OCI-LY7 (cell line): ENCODE measurements at regions of chr1 and their contacts with region 1.

Region 1: DNA sequence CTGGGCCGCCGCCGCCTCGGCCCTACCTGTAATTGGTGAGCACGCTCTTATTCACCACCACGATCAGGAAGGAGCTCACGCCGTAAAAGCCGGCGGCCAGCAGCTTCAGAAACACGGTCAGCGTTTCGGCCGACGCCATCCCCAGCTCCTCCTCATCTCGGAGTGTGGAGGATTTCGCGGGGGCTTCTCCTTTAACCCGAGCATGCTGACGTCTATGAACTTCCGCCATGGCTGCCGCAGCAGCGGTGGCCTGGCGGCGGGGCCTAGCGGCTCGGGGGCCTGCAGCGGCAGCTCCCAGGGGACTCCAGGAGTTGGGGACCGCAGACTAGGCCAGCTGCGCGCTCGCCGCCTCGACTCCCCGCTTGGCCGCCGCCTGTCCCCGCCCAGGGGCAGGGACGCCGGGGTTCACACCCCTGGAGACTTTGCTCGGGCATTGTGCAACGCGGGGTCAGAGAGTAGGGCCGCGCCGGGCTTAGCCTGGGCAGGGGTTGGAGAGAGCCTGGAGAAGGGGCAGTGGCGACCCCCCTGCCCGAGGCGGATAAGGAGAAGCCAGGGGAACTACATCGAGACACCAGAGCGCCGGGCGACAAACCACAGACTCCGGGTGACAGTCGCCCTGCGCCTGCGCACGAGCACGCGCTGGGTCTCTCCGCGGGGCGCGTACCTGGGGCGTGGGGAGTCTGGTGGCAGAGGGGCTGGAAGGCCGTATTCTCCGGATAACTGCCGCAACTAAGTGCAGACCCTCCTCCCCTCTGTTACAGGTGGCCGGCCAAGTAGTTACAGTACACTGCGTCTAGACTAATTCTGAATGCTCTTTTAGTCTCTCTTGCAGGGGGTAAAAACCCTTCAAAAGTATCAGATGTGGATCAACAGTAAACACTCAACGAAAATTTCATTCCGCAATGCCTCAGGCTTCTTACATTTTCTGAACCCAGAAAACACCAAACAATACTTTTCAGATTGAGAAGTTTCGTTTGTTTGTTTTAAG is at the start of gene SLC35D1:
- DNase-seq: peak; percentile 91
- H3K4me3 ChIP-seq: peak within 1 kb of the TSS; percentile 89
- H3K27ac ChIP-seq: peak within 1 kb of the TSS; percentile 76
- H3K4me1 ChIP-seq: peaks cover 20% of the 10 kb centered on the region
- CTCF ChIP-seq: no peak
- total RNA-seq, gene SLC35D1: 10.8 and 11.2 TPM in 2 replicates

Region 2: GRCh38 chr1:66929999-66930822 is 123.9 kb before region 1 on chr1:
- CTCF ChIA-PET with region 1: no interaction called
- POLR2A ChIA-PET with region 1: interaction called, 5 read pairs
- intact Hi-C with region 1: loop called (anchors 1 kb)
- DNase-seq: peak; percentile 96
- H3K4me3 ChIP-seq: peak overlapping the region; percentile 98
- H3K27ac ChIP-seq: peak overlapping the region; percentile 86
- H3K4me1 ChIP-seq: peaks cover 60% of the 10 kb centered on the region
- CTCF ChIP-seq: peak; percentile 36; the same call in 1 of the 2 replicates

Region 3: DNA sequence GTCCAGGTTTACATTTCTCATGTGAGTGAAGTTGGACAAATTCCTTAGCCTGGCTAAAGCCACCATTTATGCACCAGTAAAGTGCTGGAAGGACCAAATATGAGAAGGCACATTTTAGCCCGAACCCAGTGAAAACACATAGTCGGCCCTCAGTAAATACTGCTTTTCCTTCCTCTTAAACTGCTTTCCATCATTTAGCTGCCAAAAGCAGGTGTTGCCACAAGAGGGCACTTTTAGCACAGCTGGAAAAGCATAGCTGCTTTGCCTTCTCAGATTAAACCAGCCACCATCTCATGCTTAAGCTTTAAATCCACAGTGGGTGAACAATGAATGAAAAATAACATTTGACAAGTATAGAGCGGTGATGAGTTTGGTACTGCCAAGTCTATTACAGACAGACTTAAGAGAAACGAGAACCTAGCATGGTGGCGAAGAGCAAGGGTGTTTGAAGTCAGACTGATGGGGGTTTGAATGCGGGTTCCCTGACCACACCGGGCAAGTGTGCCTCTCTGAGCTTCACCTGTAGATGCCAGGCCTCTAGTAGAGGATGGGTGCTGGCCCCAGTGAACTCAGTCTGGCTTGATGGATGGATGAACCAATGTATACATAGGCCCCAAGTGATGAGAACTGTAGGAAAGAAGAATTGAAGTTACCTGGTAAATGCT is 57.9 kb before region 1 on chr1:
- CTCF ChIA-PET with region 1: no interaction called
- POLR2A ChIA-PET with region 1: no interaction called
- intact Hi-C with region 1: loop called (anchors 2 kb)
- DNase-seq: peak; percentile 85
- H3K4me3 ChIP-seq: no peak overlapping the region
- H3K27ac ChIP-seq: no peak overlapping the region
- H3K4me1 ChIP-seq: peaks cover 26% of the 10 kb centered on the region
- CTCF ChIP-seq: peak; percentile 97

Region 4: DNA sequence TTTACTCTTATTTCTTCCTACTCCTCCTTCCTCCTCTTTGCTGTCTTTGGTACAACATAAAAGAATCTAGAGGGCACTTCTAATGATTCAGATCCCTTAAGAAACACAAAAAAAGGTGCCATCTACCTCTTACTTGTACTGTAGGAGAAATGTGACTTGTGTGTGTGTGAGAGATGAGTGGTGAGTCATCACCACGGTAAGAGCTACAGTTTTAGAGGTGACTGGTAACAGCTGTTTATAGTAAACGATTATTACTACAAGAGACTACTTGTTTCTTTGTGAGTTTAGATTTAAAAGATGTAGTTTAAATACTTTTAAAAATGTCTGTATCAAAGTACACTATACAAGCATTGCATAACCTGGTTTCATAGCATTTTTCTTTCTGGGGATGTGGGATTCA is 40.5 kb before region 1 on chr1:
- CTCF ChIA-PET with region 1: no interaction called
- POLR2A ChIA-PET with region 1: interaction called, 3 read pairs
- intact Hi-C with region 1: loop called (anchors 5 kb)
- DNase-seq: no peak
- H3K4me3 ChIP-seq: no peak overlapping the region
- H3K27ac ChIP-seq: no peak overlapping the region
- H3K4me1 ChIP-seq: no peaks in the 10 kb centered on the region
- CTCF ChIP-seq: no peak

Region 5: DNA sequence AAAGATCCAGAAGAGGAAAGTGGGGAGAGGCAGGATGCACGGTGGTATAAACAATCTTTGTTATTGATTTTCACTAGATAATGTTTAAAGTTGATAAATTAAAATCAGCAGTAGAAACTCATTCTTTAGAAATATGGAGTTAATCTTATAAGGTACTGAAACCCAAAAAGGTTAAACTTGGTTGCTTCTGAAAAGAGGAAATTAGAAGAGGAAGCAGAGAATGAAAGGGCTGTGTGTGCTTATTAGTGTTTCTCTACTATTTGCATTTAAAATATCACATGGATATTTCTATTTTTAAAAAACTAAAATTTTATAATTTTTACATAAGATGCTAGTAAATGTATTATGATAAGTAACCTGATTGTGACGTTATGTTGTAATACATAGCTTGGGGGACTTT is 56.3 kb after region 1 on chr1:
- CTCF ChIA-PET with region 1: no interaction called
- POLR2A ChIA-PET with region 1: interaction called, 4 read pairs
- intact Hi-C with region 1: loop called (anchors 1 kb)
- DNase-seq: peak; percentile 73
- H3K4me3 ChIP-seq: peak overlapping the region; percentile 46
- H3K27ac ChIP-seq: peak overlapping the region; percentile 90
- H3K4me1 ChIP-seq: peaks cover 70% of the 10 kb centered on the region
- CTCF ChIP-seq: no peak

Region 6: GRCh38 chr1:67149179-67149770 is 95.2 kb after region 1 on chr1:
- CTCF ChIA-PET with region 1: interaction called, 3 read pairs
- POLR2A ChIA-PET with region 1: interaction called, 8 read pairs
- intact Hi-C with region 1: loop called (anchors 2 kb)
- DNase-seq: peak; percentile 90
- H3K4me3 ChIP-seq: peak overlapping the region; percentile 0
- H3K27ac ChIP-seq: peak overlapping the region; percentile 15
- H3K4me1 ChIP-seq: peaks cover 7% of the 10 kb centered on the region
- CTCF ChIP-seq: peak; percentile 96